ENCODE measurements at regions of chr4 and their contacts with region 1.

Region 1: GRCh38 chr4:112231779-112232713 is at the start of gene AP1AR:
- DNase-seq: peak; percentile 87
- ATAC-seq: peak; percentile 66
- H3K4me3 Mint-ChIP-seq: peak within 1 kb of the TSS; percentile 93
- H3K27ac Mint-ChIP-seq: peak within 1 kb of the TSS; percentile 95
- H3K4me1 Mint-ChIP-seq: peaks cover 34% of the 10 kb centered on the region
- H3K27me3 Mint-ChIP-seq: peaks cover under 1% of the 10 kb centered on the region
- CTCF ChIP-seq: peak; percentile 13
- total RNA-seq, gene AP1AR: 15.5 to 17.7 TPM

Region 2: DNA sequence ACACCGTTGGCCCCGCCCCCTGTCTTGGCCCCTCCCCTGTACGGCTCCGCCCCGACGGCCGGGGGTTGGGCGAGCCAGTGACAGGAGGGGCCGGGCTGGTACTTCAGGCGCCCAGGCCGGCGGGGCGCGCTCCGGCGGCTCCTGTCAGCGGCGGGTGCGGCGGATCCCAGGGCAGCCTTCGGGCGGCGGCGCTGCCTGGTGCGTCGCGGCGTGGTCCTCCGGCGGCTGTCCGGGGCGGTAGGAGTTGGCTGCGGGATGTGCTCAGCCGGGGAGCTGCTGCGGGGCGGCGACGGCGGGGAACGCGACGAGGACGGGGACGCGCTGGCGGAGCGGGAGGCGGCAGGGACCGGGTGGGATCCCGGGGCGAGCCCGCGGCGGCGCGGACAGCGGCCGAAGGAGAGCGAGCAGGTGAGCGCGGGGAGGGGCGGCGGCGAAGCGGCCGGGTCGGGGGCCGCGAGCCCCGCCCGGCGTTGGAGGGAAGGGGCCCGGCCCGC is 86.7 kb before region 1 on chr4 and contains the start of gene FAM241A:
- CTCF ChIA-PET with region 1: interaction called, 3 read pairs
- POLR2A ChIA-PET with region 1: interaction called, 5 read pairs
- intact Hi-C with region 1: loop called (anchors 2 kb)
- DNase-seq: peak; percentile 89
- ATAC-seq: peak; percentile 95
- H3K4me3 Mint-ChIP-seq: peak within 1 kb of the TSS; percentile 97
- H3K27ac Mint-ChIP-seq: peak within 1 kb of the TSS; percentile 93
- H3K4me1 Mint-ChIP-seq: peaks cover 39% of the 10 kb centered on the region
- H3K27me3 Mint-ChIP-seq: no peaks in the 10 kb centered on the region
- CTCF ChIP-seq: no peak
- total RNA-seq, gene FAM241A: 4.1 to 4.5 TPM

Region 3: GRCh38 chr4:112214390-112215264 is 17.4 kb before region 1 on chr4:
- CTCF ChIA-PET with region 1: interaction called, 17 read pairs
- POLR2A ChIA-PET with region 1: no interaction called
- intact Hi-C with region 1: no loop called
- DNase-seq: no peak
- ATAC-seq: peak; percentile 75
- H3K4me3 Mint-ChIP-seq: no peak overlapping the region
- H3K27ac Mint-ChIP-seq: no peak overlapping the region
- H3K4me1 Mint-ChIP-seq: peaks cover 9% of the 10 kb centered on the region
- H3K27me3 Mint-ChIP-seq: no peaks in the 10 kb centered on the region
- CTCF ChIP-seq: peak; percentile 63

Region 4: GRCh38 chr4:112257098-112257497 is 25.1 kb after region 1 on chr4:
- CTCF ChIA-PET with region 1: interaction called, 10 read pairs
- POLR2A ChIA-PET with region 1: no interaction called
- intact Hi-C with region 1: no loop called
- DNase-seq: no peak
- ATAC-seq: no peak
- H3K4me3 Mint-ChIP-seq: no peak overlapping the region
- H3K27ac Mint-ChIP-seq: no peak overlapping the region
- H3K4me1 Mint-ChIP-seq: peaks cover 4% of the 10 kb centered on the region
- H3K27me3 Mint-ChIP-seq: no peaks in the 10 kb centered on the region
- CTCF ChIP-seq: no peak

Region 5: DNA sequence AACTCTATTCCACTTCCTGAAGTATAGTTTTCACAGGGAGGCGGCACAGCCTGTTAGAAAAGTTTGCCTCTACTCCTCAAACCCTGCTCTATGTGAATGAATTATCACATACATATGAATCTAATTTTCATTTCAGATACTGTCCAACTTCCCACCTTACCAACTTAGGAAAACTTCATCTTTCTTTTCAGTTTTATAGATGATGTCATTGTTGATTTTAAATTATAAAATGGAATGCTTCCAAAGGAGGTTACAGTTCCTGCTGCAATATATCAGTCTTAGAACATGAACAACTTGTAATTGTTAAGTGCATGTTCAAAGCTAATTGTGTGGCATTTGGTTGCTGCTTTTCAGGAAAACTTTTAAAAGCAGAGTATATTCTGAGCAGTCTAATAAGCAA is 191.5 kb after region 1 on chr4:
- CTCF ChIA-PET with region 1: no interaction called
- POLR2A ChIA-PET with region 1: no interaction called
- intact Hi-C with region 1: no loop called
- DNase-seq: no peak
- ATAC-seq: no peak
- H3K4me3 Mint-ChIP-seq: no peak overlapping the region
- H3K27ac Mint-ChIP-seq: no peak overlapping the region
- H3K4me1 Mint-ChIP-seq: no peaks in the 10 kb centered on the region
- H3K27me3 Mint-ChIP-seq: no peaks in the 10 kb centered on the region
- CTCF ChIP-seq: no peak